Right ventricle myocardium inferior (tissue), 1 donor: ENCODE measurements at regions of chr10 and their contacts with region 1.

Region 1: DNA sequence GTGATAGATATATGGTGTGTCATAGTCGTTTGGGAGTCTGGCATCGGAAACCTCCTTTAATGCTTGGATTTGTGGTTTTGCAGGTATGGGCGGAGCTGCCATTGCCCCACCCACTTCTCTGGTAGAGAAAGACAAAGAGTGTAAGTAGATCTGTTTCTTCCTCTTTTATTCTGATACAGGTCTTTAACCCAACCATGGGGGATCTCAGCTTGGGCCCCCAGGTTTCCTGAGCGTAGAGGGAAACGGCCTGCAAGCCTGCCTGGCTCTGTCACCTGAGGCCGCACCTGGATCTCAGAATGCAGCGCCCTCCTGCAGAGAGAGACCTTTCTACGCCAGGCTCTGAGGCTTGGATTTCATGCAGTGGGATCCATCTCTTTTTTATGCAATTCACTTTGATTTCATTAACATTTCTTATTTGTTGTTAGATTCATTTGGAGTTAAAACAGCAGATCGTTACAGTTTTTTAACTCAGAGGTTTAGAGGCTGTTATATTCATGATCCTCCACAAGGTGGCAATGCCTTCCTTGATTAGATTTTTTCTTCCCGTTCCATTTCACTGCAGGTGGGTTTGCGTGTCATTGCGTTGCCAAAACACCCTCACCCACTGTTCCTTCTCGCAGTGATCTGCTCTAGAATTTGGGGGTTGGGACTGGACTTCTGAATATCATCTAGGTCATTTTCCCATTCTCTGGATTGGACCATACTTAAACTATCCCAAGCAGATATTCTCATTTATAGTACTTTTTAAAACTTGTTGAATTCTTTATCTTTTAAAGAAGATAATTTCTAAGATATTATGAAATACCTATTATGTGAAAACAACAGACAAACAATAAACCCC is 20.0 kb downstream of the RBM17 start:
- DNase-seq: no peak
- ATAC-seq: peak; percentile 14

Region 2: GRCh38 chr10:5746197-5746596 is 362.6 kb before region 1 on chr10:
- intact Hi-C with region 1: no loop called
- DNase-seq: no peak
- ATAC-seq: peak; percentile 50

Region 3: DNA sequence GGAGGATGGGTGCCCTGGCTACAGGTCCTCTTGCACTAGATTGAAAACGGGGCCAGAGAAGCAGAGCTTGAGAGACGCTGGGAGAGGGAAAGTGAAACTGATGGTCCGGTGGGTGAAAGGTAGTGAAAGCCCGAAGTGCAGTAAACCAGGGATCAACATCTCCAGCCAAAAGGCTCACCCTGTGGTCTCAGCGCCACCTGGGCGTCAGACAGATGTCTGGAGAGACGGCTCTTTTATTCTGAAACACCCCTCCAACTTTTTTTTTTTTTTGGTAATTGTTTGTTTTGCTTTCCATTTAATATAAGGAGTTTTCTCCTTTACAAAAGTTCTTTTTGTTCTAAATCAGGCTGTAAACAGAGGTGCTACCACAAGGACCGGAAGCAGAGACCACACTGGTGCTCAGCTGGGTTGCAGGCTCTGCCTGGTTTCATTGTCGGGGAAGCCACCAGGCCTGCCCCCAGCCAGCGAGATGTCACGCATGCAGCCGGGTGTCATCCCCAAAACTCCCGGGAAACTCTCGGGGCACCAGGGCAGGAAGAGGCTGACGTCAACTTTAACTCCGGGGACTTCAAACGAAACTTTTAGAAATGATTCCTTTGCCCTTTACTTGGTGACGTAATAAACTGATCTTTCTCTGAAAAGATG is 57.9 kb before region 1 on chr10:
- intact Hi-C with region 1: no loop called
- DNase-seq: peak; percentile 81
- ATAC-seq: peak; percentile 68

Region 4: DNA sequence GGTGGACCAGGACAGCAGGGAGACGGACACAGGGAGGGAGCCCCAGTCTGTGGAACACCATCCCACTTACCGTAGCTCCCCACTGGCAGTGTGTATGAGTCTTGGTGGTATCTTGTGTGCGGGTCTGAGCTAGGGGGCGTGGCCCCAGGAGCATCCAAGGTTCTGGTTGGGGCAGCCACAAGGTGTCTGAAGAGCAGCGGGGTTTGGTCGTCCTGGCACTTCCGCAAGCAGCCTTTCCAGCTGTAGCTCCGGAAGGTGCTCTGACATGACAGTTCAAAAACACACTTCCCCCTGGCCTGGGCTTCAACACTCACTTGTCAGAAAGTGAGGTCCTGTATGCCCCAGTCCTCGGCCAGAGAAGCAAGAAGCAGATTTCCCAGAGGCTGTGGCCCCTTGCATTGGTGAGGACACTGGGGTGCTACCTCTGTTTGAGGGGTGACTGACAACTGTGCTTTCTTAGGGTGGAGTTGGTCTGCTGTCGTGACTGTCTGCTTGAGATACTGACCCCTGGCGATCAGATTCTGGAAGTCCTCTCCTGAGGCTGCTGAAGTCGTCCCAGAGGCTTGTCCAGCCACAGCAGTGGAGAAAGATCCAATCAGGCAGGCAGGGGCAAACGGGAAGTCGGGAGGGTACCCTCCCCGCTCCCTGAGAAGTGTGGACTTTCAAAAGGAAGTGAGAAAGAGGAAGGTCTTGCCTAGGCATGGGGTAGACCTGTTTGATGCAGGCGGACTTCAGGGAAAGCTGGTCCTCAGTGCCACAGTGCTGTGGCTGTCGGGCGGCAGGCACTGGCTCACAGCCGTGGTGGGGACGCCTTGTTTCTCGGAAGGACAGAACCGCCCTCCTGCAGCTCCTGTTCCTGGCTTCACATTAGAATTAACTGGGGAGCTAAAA is 42.5 kb after region 1 on chr10:
- intact Hi-C with region 1: loop called (anchors 2 kb)
- DNase-seq: peak; percentile 77
- ATAC-seq: peak; percentile 71

Region 5: GRCh38 chr10:6401562-6402348 is 292.9 kb after region 1 on chr10:
- intact Hi-C with region 1: loop called (anchors 2 kb)
- DNase-seq: peak; percentile 82
- ATAC-seq: peak; percentile 96